SK-N-SH (cell line): ENCODE measurements at regions of chr1 and their contacts with region 1.

Region 1: DNA sequence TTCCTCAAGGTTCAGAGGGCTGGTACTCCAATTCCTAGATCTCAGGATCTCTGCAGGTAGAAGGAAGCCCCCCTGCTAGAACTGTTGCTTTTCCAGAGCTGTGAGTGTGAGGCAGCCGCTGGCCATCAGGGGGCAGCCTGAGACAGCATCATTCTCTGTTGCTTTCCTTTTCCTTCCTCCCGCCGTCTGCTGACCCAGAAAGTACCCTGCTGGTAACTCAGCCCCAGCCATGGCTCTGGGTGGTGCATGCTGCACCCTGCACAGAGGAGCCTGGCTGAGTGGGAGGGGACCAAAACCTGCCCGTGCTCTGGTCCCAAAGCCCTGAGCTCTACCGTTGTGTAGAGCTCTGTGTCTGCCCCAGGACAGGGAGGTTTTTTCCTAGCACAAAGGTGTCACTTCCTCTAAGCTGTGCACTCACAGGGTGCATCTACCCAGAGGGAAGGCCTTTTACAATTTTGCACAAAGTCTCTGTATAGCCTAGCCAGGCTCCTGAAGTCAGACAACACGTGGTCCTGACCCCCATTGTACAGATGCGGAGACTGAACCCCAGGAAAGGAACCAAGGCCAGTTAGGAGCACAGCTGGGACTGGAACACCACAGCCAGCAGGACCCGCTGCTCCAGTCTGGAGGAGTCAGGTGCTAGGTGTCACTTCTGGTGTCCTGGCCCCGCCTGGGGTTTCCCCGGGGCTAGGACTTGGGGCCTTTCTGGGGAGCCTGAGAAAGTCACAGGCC is 5.6 kb upstream of the FAM131C start:
- DNase-seq: peak; percentile 84
- H3K4me3 ChIP-seq: peak overlapping the region in 1 of 2 experiments; percentile 18; a peak in 1 of 4 replicates
- H3K27ac ChIP-seq: no peak overlapping the region; a peak in 1 of 4 replicates
- H3K4me1 ChIP-seq: peaks cover 15 to 17% of the 10 kb centered on the region in 2 experiments; a peak in 3 of 4 replicates
- H3K27me3 ChIP-seq: no peaks in the 10 kb centered on the region
- CTCF ChIP-seq: peak; percentile 93
- EP300 ChIP-seq: no peak
- RAD21 ChIP-seq: peak; percentile 98

Region 2: GRCh38 chr1:15902882-15903281 is 176.2 kb before region 1 on chr1:
- CTCF ChIA-PET with region 1: no interaction called
- POLR2A ChIA-PET with region 1: no interaction called
- DNase-seq: no peak
- H3K4me3 ChIP-seq: no peak overlapping the region
- H3K27ac ChIP-seq: peak overlapping the region in 1 of 2 experiments; percentile 54; a peak in 2 of 4 replicates
- H3K4me1 ChIP-seq: peaks cover 0 to 12% of the 10 kb centered on the region in 2 experiments; a peak in 1 of 4 replicates
- H3K27me3 ChIP-seq: no peaks in the 10 kb centered on the region
- CTCF ChIP-seq: no peak
- EP300 ChIP-seq: no peak
- RAD21 ChIP-seq: no peak

Region 3: GRCh38 chr1:16067127-16067768 is 11.8 kb before region 1 on chr1:
- CTCF ChIA-PET with region 1: interaction called, 35 read pairs
- POLR2A ChIA-PET with region 1: no interaction called
- DNase-seq: peak; percentile 49
- H3K4me3 ChIP-seq: no peak overlapping the region
- H3K27ac ChIP-seq: no peak overlapping the region
- H3K4me1 ChIP-seq: peaks cover 0 to 4% of the 10 kb centered on the region in 2 experiments; a peak in 1 of 4 replicates
- H3K27me3 ChIP-seq: no peaks in the 10 kb centered on the region
- CTCF ChIP-seq: no peak
- EP300 ChIP-seq: no peak
- RAD21 ChIP-seq: no peak

Region 4: GRCh38 chr1:16111771-16112595 is 32.9 kb after region 1 on chr1:
- CTCF ChIA-PET with region 1: interaction called, 13 read pairs
- POLR2A ChIA-PET with region 1: no interaction called
- DNase-seq: no peak
- H3K4me3 ChIP-seq: no peak overlapping the region
- H3K27ac ChIP-seq: peak overlapping the region in 1 of 2 experiments; percentile 42; a peak in 1 of 4 replicates
- H3K4me1 ChIP-seq: peaks cover 17 to 24% of the 10 kb centered on the region in 2 experiments; a peak in 3 of 4 replicates
- H3K27me3 ChIP-seq: no peaks in the 10 kb centered on the region
- CTCF ChIP-seq: no peak
- EP300 ChIP-seq: no peak
- RAD21 ChIP-seq: no peak

Region 5: GRCh38 chr1:16167331-16168143 is 88.4 kb after region 1 on chr1:
- CTCF ChIA-PET with region 1: interaction called, 16 read pairs
- POLR2A ChIA-PET with region 1: no interaction called
- DNase-seq: peak; percentile 92
- H3K4me3 ChIP-seq: peak overlapping the region in 1 of 2 experiments; percentile 49; a peak in 2 of 4 replicates
- H3K27ac ChIP-seq: peak overlapping the region in 1 of 2 experiments; percentile 12; a peak in 1 of 4 replicates
- H3K4me1 ChIP-seq: peaks cover 0 to 8% of the 10 kb centered on the region in 2 experiments; a peak in 2 of 4 replicates
- H3K27me3 ChIP-seq: no peaks in the 10 kb centered on the region
- CTCF ChIP-seq: no peak
- EP300 ChIP-seq: no peak
- RAD21 ChIP-seq: no peak

Region 6: GRCh38 chr1:16206547-16207317 is 127.6 kb after region 1 on chr1:
- CTCF ChIA-PET with region 1: interaction called, 43 read pairs
- POLR2A ChIA-PET with region 1: no interaction called
- DNase-seq: peak; percentile 97
- H3K4me3 ChIP-seq: peak overlapping the region; percentile 53 to 63
- H3K27ac ChIP-seq: peak overlapping the region; percentile 84 to 90
- H3K4me1 ChIP-seq: peaks cover 0 to 22% of the 10 kb centered on the region in 2 experiments; a peak in 1 of 4 replicates
- H3K27me3 ChIP-seq: no peaks in the 10 kb centered on the region
- CTCF ChIP-seq: no peak
- EP300 ChIP-seq: 0 out of 4 replicates have a peak, but pooled peaks of 1 of the 2 experiments have one; percentile 2
- RAD21 ChIP-seq: no peak

Region 7: DNA sequence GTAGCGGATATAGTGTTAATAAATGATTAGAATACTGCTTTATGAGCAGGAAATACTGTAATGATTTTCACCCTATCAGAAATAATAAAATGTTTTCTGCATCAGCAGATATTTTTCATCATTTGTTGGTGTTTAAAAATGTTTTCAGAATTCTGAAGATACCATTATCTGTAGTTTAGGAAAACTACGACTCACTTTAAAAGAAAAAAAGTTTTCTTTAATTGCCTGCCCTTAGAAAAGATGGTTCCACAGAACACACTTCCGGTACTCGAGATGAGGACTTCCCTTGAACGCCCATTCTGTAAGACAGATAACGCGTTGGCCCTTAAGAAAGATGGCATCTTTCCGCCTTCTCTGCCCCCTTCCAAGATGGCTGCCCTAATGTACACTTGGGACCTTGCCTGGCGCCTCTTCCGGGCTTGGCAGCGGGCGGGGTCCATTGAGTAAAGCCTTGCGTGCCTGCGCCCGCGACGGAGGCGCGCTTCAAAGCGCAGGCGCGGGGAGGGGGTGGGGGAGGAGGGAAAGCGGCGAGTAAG is 287.7 kb after region 1 on chr1 and contains the start of gene SZRD1:
- CTCF ChIA-PET with region 1: interaction called, 93 read pairs
- POLR2A ChIA-PET with region 1: no interaction called
- DNase-seq: peak; percentile 94
- H3K4me3 ChIP-seq: peak within 1 kb of the TSS; percentile 76 to 78
- H3K27ac ChIP-seq: peak within 1 kb of the TSS; percentile 95 to 97
- H3K4me1 ChIP-seq: peaks cover 9 to 11% of the 10 kb centered on the region in 2 experiments; a peak in 3 of 4 replicates
- H3K27me3 ChIP-seq: no peaks in the 10 kb centered on the region
- CTCF ChIP-seq: no peak
- EP300 ChIP-seq: no peak
- RAD21 ChIP-seq: no peak
- polyA plus RNA-seq, gene SZRD1: 100 and 119 TPM in 2 replicates